ENCODE measurements at regions of chr10 and their contacts with region 1.

Region 1: GRCh38 chr10:102583435-102584417 is 60.6 kb upstream of the TRIM8 start:
- DNase-seq: peak; percentile 91
- ATAC-seq: peak; percentile 92
- H3K4me3 Mint-ChIP-seq: no peak overlapping the region
- H3K27ac Mint-ChIP-seq: no peak overlapping the region
- H3K4me1 Mint-ChIP-seq: peaks cover 21% of the 10 kb centered on the region
- H3K27me3 Mint-ChIP-seq: no peaks in the 10 kb centered on the region; the same call in 1 of the 2 replicates
- CTCF ChIP-seq: peak; percentile 83

Region 2: GRCh38 chr10:102384053-102384452 is 199.7 kb before region 1 on chr10:
- CTCF ChIA-PET with region 1: interaction called, 39 read pairs
- POLR2A ChIA-PET with region 1: no interaction called
- DNase-seq: peak; percentile 72
- ATAC-seq: peak; percentile 93
- H3K4me3 Mint-ChIP-seq: no peak overlapping the region
- H3K27ac Mint-ChIP-seq: no peak overlapping the region
- H3K4me1 Mint-ChIP-seq: no peaks in the 10 kb centered on the region
- H3K27me3 Mint-ChIP-seq: no peaks in the 10 kb centered on the region; the same call in 1 of the 2 replicates
- CTCF ChIP-seq: no peak

Region 3: GRCh38 chr10:102450194-102450938 is 133.4 kb before region 1 on chr10:
- CTCF ChIA-PET with region 1: interaction called, 10 read pairs
- POLR2A ChIA-PET with region 1: no interaction called
- DNase-seq: peak; percentile 80
- ATAC-seq: peak; percentile 52
- H3K4me3 Mint-ChIP-seq: peak overlapping the region; percentile 93
- H3K27ac Mint-ChIP-seq: peak overlapping the region; percentile 83
- H3K4me1 Mint-ChIP-seq: peaks cover 39% of the 10 kb centered on the region
- H3K27me3 Mint-ChIP-seq: no peaks in the 10 kb centered on the region
- CTCF ChIP-seq: no peak

Region 4: GRCh38 chr10:102503281-102504220 is 80.2 kb before region 1 on chr10 and contains the start of gene SUFU:
- CTCF ChIA-PET with region 1: interaction called, 163 read pairs
- POLR2A ChIA-PET with region 1: interaction called, 7 read pairs
- DNase-seq: peak; percentile 98
- ATAC-seq: peak; percentile 74
- H3K4me3 Mint-ChIP-seq: peak within 1 kb of the TSS; percentile 95
- H3K27ac Mint-ChIP-seq: peak within 1 kb of the TSS; percentile 41; the same call in 1 of the 2 replicates
- H3K4me1 Mint-ChIP-seq: peaks cover 8% of the 10 kb centered on the region; the same call in 1 of the 2 replicates
- H3K27me3 Mint-ChIP-seq: peaks cover 12% of the 10 kb centered on the region
- CTCF ChIP-seq: peak; percentile 70
- total RNA-seq, gene SUFU: 11.6 to 13.1 TPM (median 12.8 TPM) in 3 replicates

Region 5: GRCh38 chr10:102596506-102596971 is 12.8 kb after region 1 on chr10:
- CTCF ChIA-PET with region 1: interaction called, 26 read pairs
- POLR2A ChIA-PET with region 1: no interaction called
- DNase-seq: peak; percentile 72
- ATAC-seq: peak; percentile 90
- H3K4me3 Mint-ChIP-seq: no peak overlapping the region
- H3K27ac Mint-ChIP-seq: peak overlapping the region; percentile 28; the same call in 1 of the 2 replicates
- H3K4me1 Mint-ChIP-seq: peaks cover 16% of the 10 kb centered on the region
- H3K27me3 Mint-ChIP-seq: no peaks in the 10 kb centered on the region
- CTCF ChIP-seq: peak; percentile 60

Region 6: GRCh38 chr10:102678842-102679289 is 95.1 kb after region 1 on chr10:
- CTCF ChIA-PET with region 1: interaction called, 10 read pairs
- POLR2A ChIA-PET with region 1: no interaction called
- DNase-seq: peak; percentile 92
- ATAC-seq: peak; percentile 85
- H3K4me3 Mint-ChIP-seq: peak overlapping the region; percentile 27
- H3K27ac Mint-ChIP-seq: peak overlapping the region; percentile 94
- H3K4me1 Mint-ChIP-seq: peaks cover 61% of the 10 kb centered on the region
- H3K27me3 Mint-ChIP-seq: no peaks in the 10 kb centered on the region
- CTCF ChIP-seq: no peak; the same call in 1 of the 2 replicates

Region 7: GRCh38 chr10:102691285-102692066 is 107.8 kb after region 1 on chr10:
- CTCF ChIA-PET with region 1: no interaction called
- POLR2A ChIA-PET with region 1: no interaction called
- DNase-seq: no peak
- ATAC-seq: no peak
- H3K4me3 Mint-ChIP-seq: no peak overlapping the region
- H3K27ac Mint-ChIP-seq: peak overlapping the region; percentile 73; the same call in 1 of the 2 replicates
- H3K4me1 Mint-ChIP-seq: no peaks in the 10 kb centered on the region
- H3K27me3 Mint-ChIP-seq: no peaks in the 10 kb centered on the region
- CTCF ChIP-seq: no peak

Region 8: DNA sequence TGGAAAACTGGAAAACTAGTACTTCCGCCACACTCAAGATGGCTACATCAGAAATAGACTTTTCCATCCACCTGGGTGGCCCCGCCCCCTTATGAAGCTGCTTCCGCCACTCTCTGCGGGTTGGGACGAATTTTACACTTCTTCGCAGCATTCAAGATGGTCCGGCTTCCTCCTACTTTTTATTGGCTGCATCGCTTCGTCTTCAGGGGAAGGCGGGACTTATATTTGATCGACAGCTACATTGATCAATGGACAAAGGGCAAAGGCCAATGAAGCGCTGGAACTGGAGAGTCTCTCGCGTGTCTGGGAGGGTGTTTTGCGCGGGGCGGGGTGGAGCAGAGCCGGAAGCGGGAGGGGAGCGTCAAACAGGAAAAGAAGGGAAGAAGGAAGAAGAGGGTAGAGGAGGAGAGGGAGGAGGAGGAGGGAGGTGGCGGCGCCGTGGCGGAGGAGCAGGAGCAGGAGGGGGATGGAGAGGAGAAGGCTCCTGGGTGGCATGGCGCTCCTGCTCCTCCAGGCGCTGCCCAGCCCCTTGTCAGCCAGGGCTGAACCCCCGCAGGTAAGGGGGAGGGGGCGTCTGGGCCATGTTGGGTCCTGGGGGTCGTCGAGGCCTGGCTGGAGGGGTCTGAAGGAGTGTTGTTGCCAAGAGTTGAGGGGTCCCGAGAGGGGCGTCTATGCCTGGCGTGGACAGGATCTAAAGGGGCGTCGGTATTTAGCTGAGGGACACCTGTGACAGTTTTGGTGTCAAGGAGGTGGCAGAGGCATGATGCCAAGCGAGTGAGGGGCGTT is 160.1 kb after region 1 on chr10 and contains the start of gene WBP1L:
- CTCF ChIA-PET with region 1: no interaction called
- POLR2A ChIA-PET with region 1: no interaction called
- DNase-seq: peak; percentile 93
- ATAC-seq: peak; percentile 96
- H3K4me3 Mint-ChIP-seq: peak within 1 kb of the TSS; percentile 98
- H3K27ac Mint-ChIP-seq: peak within 1 kb of the TSS; percentile 82
- H3K4me1 Mint-ChIP-seq: peaks cover 45% of the 10 kb centered on the region
- H3K27me3 Mint-ChIP-seq: peaks cover 12% of the 10 kb centered on the region
- CTCF ChIP-seq: no peak
- total RNA-seq, gene WBP1L: 25.9 to 26.8 TPM (median 26.4 TPM) in 3 replicates